ENCODE measurements at regions of chr19 and their contacts with region 1.

Region 1: GRCh38 chr19:58305065-58305931 is at the start of gene ERVK3-1:
- DNase-seq: peak; percentile 89 to 99 (median 93)
- ATAC-seq: peak; percentile 96
- H3K4me3 ChIP-seq: peak within 1 kb of the TSS; percentile 82 to 89
- H3K4me3 Mint-ChIP-seq: peak within 1 kb of the TSS; percentile 98
- H3K27ac ChIP-seq: peak within 1 kb of the TSS; percentile 93 to 95
- H3K27ac Mint-ChIP-seq: peak within 1 kb of the TSS; percentile 99
- H3K4me1 ChIP-seq: peaks cover 27% of the 10 kb centered on the region
- H3K4me1 Mint-ChIP-seq: peaks cover 53% of the 10 kb centered on the region
- H3K27me3 ChIP-seq: no peaks in the 10 kb centered on the region
- H3K27me3 Mint-ChIP-seq: no peaks in the 10 kb centered on the region
- CTCF ChIP-seq: no peak
- total RNA-seq, gene ERVK3-1: 174 to 182 TPM

Region 2: DNA sequence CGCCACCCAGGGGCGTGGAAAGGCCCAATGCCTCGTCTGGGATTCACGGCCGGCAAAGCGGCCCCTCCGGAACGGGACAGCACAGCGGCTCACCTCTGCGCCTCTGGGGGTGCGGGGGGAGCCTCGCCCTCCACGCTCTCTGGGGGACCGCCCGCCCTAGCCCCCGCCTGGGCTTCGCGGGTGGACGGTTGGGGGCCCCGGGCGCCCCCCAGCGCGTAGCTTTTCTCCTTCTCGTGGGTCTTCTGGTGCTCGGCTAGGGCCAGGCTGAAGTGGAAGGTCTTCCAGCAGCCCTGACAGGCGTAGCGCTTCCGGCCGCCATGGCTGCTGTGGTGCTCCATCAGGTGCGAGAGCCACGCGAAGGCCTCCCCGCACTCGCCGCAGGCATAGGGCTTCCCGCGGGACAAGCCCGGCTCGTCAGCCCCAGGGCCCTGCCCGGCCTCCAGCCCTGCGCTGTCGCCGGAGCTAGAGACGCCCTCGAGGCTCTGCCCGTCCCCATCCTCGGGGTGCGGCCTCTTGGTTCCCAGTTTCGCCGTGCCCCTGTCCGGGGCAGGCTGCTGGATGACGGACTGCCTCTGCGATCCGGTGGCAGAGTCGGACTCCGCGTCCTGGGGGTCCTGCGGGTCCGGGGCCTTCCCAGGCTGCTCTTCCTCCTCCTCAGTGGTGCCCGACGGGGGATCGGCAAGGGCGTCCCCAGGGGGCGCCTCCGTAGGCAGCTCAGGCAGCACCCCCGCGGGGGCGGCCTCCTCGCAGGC is 220.5 kb before region 1 on chr19:
- CTCF ChIA-PET with region 1: no interaction called
- POLR2A ChIA-PET with region 1: no interaction called
- intact Hi-C with region 1: no loop called
- DNase-seq: no peak
- ATAC-seq: no peak
- H3K4me3 ChIP-seq: no peak overlapping the region
- H3K4me3 Mint-ChIP-seq: no peak overlapping the region
- H3K27ac ChIP-seq: no peak overlapping the region
- H3K27ac Mint-ChIP-seq: no peak overlapping the region
- H3K4me1 ChIP-seq: no peaks in the 10 kb centered on the region
- H3K4me1 Mint-ChIP-seq: no peaks in the 10 kb centered on the region
- H3K27me3 ChIP-seq: no peaks in the 10 kb centered on the region
- H3K27me3 Mint-ChIP-seq: no peaks in the 10 kb centered on the region
- CTCF ChIP-seq: no peak

Region 3: DNA sequence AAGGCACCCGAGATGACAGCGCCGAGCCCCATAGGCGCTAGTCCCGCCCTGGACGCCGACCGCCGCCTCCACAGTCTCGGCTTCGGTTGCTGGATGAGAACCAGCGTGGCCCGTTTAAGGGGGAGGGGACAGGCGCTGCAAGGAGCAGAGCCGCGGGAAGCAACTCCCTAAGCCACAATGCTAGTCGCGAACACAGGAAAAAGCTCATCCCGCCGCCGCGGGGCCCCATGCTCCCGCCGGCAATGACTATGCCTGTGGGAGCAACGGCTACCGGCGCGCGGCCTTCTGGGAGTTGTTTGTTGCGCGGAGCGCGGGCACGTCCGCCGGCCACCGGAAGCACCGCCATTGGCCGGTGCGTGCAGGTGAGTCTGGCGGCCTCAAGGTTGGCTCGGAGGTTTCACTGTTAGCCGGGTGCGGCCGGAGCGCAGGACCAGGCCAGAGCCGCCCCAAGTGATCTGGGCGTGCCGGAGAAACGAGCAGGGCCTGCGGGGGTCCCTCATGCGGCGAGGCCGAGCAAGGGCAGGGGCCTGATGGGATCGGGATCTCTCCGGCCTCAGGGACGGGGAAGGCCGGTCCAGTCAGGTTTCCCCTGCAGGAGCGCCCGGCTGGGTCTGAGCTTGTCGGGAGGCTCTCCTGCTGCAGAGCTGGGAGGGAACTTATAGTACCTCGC is 76.6 kb before region 1 on chr19 and contains the start of gene ZNF544:
- CTCF ChIA-PET with region 1: interaction called, 5 read pairs
- POLR2A ChIA-PET with region 1: no interaction called
- intact Hi-C with region 1: loop called in 1 of 2 experiments (anchors 2 kb)
- DNase-seq: peak in 8 of 9 experiments; percentile 35 to 78 (median 54)
- ATAC-seq: peak; percentile 71
- H3K4me3 ChIP-seq: peak within 1 kb of the TSS; percentile 72 to 93
- H3K4me3 Mint-ChIP-seq: peak within 1 kb of the TSS; percentile 93
- H3K27ac ChIP-seq: peak within 1 kb of the TSS; percentile 37 to 79
- H3K27ac Mint-ChIP-seq: peak within 1 kb of the TSS; percentile 85
- H3K4me1 ChIP-seq: peaks cover 13% of the 10 kb centered on the region
- H3K4me1 Mint-ChIP-seq: peaks cover 34% of the 10 kb centered on the region
- H3K27me3 ChIP-seq: no peaks in the 10 kb centered on the region
- H3K27me3 Mint-ChIP-seq: no peaks in the 10 kb centered on the region
- CTCF ChIP-seq: no peak
- total RNA-seq, gene ZNF544: 9.5 to 12.5 TPM

Region 4: GRCh38 chr19:58261968-58262921 is 43.1 kb before region 1 on chr19:
- CTCF ChIA-PET with region 1: no interaction called
- POLR2A ChIA-PET with region 1: no interaction called
- intact Hi-C with region 1: no loop called
- DNase-seq: no peak
- ATAC-seq: no peak
- H3K4me3 ChIP-seq: peak overlapping the region in 1 of 2 experiments; percentile 24
- H3K4me3 Mint-ChIP-seq: no peak overlapping the region
- H3K27ac ChIP-seq: no peak overlapping the region
- H3K27ac Mint-ChIP-seq: no peak overlapping the region
- H3K4me1 ChIP-seq: no peaks in the 10 kb centered on the region
- H3K4me1 Mint-ChIP-seq: no peaks in the 10 kb centered on the region
- H3K27me3 ChIP-seq: no peaks in the 10 kb centered on the region
- H3K27me3 Mint-ChIP-seq: no peaks in the 10 kb centered on the region
- CTCF ChIP-seq: no peak

Region 5: DNA sequence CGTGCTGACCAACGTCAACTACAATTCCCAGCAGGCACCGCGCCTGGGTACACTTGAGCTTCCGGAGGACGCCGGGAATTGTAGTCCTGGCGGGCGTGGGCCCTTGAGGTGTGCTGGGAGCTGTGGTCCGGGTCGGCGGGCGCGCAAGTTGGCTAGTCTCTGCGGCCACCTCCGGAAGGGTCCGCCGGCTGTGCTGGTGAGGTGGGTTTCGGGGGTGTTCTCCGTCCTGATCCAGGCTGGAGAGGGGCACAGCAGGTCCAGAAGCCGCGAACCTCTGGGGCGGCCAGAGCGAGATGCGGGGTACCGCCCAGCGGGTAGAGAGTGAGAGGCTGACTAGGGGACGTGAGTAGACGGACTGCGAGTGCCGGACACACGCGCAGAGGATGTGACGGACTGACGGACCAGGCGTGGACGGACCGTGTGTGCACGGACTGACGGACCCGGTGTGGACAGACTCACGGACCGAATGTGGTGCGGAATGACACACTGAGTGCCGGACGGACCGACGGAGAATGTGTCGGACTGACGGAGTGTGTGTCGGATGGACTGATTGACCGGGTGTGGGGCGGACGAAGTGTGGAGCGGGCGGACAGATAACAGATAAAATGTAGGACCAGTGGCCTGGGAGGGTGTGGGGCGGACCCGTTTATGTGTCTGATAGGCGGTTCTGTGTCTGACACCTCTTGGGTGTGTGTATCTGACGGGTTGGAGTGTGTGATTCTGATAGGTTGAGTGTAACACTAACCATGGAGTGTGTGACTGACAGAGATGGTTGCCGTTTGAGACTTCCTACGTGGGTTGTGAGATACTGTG is 21.8 kb after region 1 on chr19 and contains the start of gene ZSCAN22:
- CTCF ChIA-PET with region 1: no interaction called
- POLR2A ChIA-PET with region 1: interaction called, 14 read pairs
- intact Hi-C with region 1: loop called (anchors 1 kb)
- DNase-seq: peak; percentile 76 to 94 (median 89)
- ATAC-seq: peak; percentile 78
- H3K4me3 ChIP-seq: peak within 1 kb of the TSS; percentile 84 to 96
- H3K4me3 Mint-ChIP-seq: no peak within 1 kb of the TSS
- H3K27ac ChIP-seq: peak within 1 kb of the TSS; percentile 77 to 96
- H3K27ac Mint-ChIP-seq: no peak within 1 kb of the TSS
- H3K4me1 ChIP-seq: peaks cover 19% of the 10 kb centered on the region
- H3K4me1 Mint-ChIP-seq: peaks cover 3% of the 10 kb centered on the region
- H3K27me3 ChIP-seq: no peaks in the 10 kb centered on the region
- H3K27me3 Mint-ChIP-seq: no peaks in the 10 kb centered on the region
- CTCF ChIP-seq: no peak
- total RNA-seq, gene ZSCAN22: 1.7 to 2.2 TPM

Region 6: DNA sequence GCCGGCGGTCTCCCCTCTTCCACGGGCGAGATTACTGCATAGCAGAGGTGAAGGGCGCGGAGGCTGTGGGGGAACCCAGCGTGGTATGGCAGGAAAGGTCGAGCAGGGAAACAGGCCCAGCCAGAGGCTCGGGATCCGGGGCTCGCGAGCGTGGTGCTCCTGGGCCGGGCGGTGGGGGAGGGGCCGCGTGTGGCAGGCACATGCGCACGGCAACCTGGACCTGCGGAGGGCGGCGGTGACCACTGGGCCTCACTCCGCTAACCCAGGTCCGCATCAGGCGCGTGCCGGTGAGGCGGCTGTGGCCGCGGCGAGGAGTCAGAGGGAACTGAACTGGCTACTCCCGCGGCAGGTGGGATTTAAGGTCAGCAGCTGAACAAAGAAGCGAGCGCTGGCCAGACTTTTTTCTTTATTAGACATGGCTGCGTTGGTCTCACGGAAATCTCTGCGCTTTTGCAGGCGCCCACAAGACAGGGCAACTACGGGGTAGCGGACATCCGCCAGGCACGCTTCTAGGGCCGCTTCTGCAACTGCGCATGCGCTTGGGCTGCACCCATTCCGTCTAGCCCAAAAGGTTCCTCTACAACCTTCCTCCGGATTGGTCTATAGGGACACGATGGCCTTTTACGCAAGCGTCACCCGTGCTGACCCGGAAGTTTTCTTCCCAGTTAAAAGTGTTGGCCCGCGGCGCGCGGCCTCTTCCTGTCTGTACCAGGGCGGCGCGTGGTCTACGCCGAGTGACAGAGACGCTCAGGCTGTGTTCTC is 81.5 kb after region 1 on chr19 and contains the start of gene RPS5:
- CTCF ChIA-PET with region 1: no interaction called
- POLR2A ChIA-PET with region 1: no interaction called
- intact Hi-C with region 1: loop called (anchors 1 kb)
- DNase-seq: peak; percentile 92 to 100 (median 95)
- ATAC-seq: peak; percentile 88
- H3K4me3 ChIP-seq: peak within 1 kb of the TSS; percentile 88 to 90
- H3K4me3 Mint-ChIP-seq: peak within 1 kb of the TSS; percentile 93
- H3K27ac ChIP-seq: peak within 1 kb of the TSS; percentile 94 to 98
- H3K27ac Mint-ChIP-seq: peak within 1 kb of the TSS; percentile 99
- H3K4me1 ChIP-seq: peaks cover 41% of the 10 kb centered on the region
- H3K4me1 Mint-ChIP-seq: peaks cover 52% of the 10 kb centered on the region
- H3K27me3 ChIP-seq: no peaks in the 10 kb centered on the region
- H3K27me3 Mint-ChIP-seq: no peaks in the 10 kb centered on the region
- CTCF ChIP-seq: no peak
- total RNA-seq, gene RPS5: 1,884 to 1,887 TPM

Region 7: DNA sequence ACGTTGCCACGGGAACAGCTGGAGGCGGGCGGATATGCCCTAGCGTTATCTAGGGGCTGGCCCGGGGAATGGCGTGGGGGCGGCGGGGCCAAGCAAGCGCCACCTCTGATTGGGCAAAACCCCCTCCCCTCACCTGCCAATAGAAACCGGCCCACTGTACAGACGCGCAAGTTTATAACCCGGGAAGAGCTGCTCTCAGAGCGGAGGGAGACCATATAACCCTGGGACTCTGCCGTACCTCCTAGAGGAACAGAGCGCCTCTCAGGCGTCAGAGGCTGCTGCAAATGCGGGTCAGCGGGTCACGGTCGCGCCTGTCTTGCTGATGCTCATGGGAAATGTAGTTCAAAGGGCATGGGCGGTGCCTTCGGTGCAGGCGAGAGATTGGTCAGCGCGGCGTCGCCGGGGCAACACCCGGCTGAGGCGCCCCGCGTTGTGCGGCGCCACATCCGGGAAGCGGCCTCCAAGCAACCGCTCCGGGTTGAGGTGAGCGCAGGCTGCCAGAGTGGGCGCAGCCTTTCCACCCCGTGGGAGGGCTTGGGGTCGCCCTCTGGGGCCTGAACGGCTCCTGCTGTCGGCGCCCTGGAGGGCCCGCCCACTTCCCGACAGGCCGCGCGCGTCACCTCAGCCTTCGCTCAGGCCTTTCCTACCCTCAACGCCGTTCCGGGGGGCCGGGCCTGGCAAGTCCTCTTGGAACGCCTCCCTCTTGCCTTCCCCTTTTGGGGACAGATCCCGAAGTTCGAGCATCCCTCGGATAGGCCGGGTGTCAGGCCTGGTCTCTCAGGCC is 170.6 kb after region 1 on chr19 and contains the start of gene ZNF446:
- CTCF ChIA-PET with region 1: no interaction called
- POLR2A ChIA-PET with region 1: no interaction called
- intact Hi-C with region 1: loop called in 1 of 2 experiments (anchors 1 kb)
- DNase-seq: peak; percentile 92 to 99 (median 97)
- ATAC-seq: peak; percentile 82
- H3K4me3 ChIP-seq: peak within 1 kb of the TSS; percentile 56 to 72
- H3K4me3 Mint-ChIP-seq: peak within 1 kb of the TSS; percentile 92
- H3K27ac ChIP-seq: peak within 1 kb of the TSS; percentile 75 to 95
- H3K27ac Mint-ChIP-seq: peak within 1 kb of the TSS; percentile 97
- H3K4me1 ChIP-seq: peaks cover 17% of the 10 kb centered on the region
- H3K4me1 Mint-ChIP-seq: peaks cover 16% of the 10 kb centered on the region
- H3K27me3 ChIP-seq: no peaks in the 10 kb centered on the region
- H3K27me3 Mint-ChIP-seq: no peaks in the 10 kb centered on the region
- CTCF ChIP-seq: no peak
- total RNA-seq, gene ZNF446: 14.6 to 16.5 TPM